Activated B cell treated with CpG ODN at 0.5 μM for 24 hours (primary cell): ENCODE measurements at regions of chr14 and their contacts with region 1.

Region 1: DNA sequence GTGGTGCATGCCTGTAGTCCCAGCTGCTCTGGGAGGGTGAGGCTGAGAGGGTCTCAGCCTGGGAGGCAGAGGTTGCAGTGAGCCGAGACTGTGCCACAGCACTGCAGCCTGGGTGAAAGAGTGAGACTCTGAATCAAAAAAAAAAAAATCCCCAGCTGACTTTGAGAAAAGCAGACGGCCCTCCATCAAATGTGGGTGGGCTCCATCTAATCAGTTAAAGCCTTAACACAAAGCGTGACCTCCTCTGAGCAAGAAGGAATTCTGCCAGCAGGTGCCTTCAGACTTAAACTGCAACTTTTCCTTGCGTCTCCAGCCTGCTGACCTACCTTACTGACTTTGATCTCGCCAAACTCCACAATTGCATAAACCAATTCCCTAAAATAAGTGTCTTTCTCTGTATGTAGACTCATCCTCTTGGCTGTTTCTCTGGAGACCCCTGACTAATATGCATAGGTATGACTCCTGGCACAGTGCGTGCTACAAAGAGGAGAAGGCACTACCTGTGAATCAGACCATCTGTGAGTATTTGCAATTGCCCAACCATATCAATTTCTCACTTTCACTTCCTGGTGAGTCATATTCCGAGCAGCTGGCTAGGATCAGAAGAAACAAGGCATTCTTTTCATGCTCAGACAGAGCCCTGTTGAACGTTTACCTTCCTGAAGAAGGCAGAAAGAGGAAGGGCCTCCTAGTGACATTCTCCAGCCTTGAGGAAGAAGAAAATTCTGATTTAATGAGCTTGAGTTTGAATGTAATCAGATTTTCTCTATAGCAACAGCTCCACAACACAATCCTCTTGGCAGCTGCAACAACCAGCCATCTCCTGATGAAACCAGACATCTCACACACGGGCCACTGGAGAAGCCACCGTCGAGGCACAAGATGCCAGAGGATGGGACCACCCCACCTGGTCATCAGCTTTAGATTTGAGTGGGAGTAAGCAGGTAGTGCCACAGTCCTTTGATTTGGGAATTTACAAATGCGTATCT is 54.3 kb downstream of the CLMN start:
- DNase-seq: peak; percentile 25
- ATAC-seq: peak; percentile 88
- H3K4me3 Mint-ChIP-seq: peak overlapping the region; percentile 63
- H3K27ac Mint-ChIP-seq: peak overlapping the region; percentile 87
- H3K4me1 Mint-ChIP-seq: peaks cover 55% of the 10 kb centered on the region
- H3K27me3 Mint-ChIP-seq: no peaks in the 10 kb centered on the region
- CTCF ChIP-seq: no peak

Region 2: GRCh38 chr14:95140060-95140858 is 125.1 kb before region 1 on chr14:
- CTCF ChIA-PET with region 1: no interaction called
- POLR2A ChIA-PET with region 1: no interaction called
- intact Hi-C with region 1: loop called (anchors 1 kb)
- DNase-seq: no peak
- ATAC-seq: peak; percentile 52
- H3K4me3 Mint-ChIP-seq: peak overlapping the region; percentile 64
- H3K27ac Mint-ChIP-seq: peak overlapping the region; percentile 78
- H3K4me1 Mint-ChIP-seq: peaks cover 79% of the 10 kb centered on the region
- H3K27me3 Mint-ChIP-seq: no peaks in the 10 kb centered on the region
- CTCF ChIP-seq: no peak

Region 3: DNA sequence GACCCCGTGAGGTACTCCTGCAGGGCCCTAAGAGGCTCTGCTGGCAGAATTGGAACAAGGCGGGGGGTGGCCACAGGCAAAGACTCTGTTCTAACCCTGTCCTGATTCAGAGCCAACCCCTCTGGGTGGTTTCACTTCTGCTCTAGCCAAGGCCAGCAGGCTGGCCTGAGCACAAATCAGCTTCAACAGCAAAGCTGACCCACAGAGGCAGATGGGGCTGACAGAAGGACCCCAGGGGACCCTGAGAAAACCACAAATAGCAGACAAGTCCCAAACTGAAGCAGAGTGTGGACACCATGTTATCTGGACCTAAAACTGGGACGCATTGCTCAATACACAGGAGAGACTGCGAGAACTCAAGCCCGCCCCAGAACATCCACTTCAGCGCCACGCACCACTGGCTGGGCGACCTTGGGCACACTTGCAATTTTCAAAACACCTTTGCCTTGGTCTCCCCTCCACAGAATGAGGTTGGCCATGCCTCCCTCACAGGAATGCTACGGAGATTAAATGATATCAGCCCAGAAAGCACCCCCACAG is 31.6 kb before region 1 on chr14:
- CTCF ChIA-PET with region 1: no interaction called
- POLR2A ChIA-PET with region 1: no interaction called
- intact Hi-C with region 1: loop called (anchors 2 kb)
- DNase-seq: peak; percentile 24
- ATAC-seq: peak; percentile 91
- H3K4me3 Mint-ChIP-seq: peak overlapping the region; percentile 19
- H3K27ac Mint-ChIP-seq: peak overlapping the region; percentile 50
- H3K4me1 Mint-ChIP-seq: peaks cover 21% of the 10 kb centered on the region
- H3K27me3 Mint-ChIP-seq: no peaks in the 10 kb centered on the region
- CTCF ChIP-seq: no peak

Region 4: DNA sequence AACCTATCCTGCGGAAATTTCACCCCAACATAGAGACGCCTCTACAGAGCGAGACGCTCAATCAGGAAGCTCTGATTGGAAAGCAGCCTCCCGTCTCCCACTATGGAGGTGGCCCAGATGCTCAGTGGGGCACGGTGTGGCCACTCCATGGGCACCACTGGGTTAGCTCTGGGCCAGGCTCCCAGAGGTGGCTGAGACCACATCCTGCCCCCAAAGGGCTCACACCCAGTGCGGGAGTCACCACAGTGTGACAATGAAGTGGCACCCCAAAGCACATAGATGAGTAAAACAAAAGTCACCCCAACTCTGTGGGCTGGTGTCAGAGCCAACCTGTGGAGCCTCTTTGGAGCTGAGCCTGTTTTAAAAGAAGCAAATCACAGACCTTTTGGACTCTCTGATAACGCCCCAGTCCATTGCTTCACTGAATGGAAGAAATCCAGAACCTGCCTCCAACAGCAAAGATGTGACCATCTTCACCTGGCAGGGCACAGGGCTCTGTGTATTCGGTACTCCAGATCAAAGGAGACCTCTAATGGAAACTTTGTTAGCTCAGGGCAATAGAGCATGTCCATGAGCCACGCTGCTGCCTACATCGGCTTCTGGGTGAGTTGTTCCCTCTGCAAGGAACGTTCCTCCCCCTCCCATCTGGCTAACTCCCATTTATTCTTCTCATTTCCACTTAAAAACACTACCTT is 34.7 kb after region 1 on chr14:
- CTCF ChIA-PET with region 1: no interaction called
- POLR2A ChIA-PET with region 1: interaction called, 11 read pairs
- intact Hi-C with region 1: loop called (anchors 1 kb)
- DNase-seq: no peak
- ATAC-seq: peak; percentile 78
- H3K4me3 Mint-ChIP-seq: no peak overlapping the region
- H3K27ac Mint-ChIP-seq: no peak overlapping the region
- H3K4me1 Mint-ChIP-seq: peaks cover 73% of the 10 kb centered on the region
- H3K27me3 Mint-ChIP-seq: no peaks in the 10 kb centered on the region
- CTCF ChIP-seq: no peak

Region 5: GRCh38 chr14:95327558-95328374 is 62.4 kb after region 1 on chr14:
- CTCF ChIA-PET with region 1: interaction called, 4 read pairs
- POLR2A ChIA-PET with region 1: interaction called, 28 read pairs
- intact Hi-C with region 1: loop called (anchors 1 kb)
- DNase-seq: peak; percentile 48
- ATAC-seq: peak; percentile 84
- H3K4me3 Mint-ChIP-seq: peak overlapping the region; percentile 76
- H3K27ac Mint-ChIP-seq: peak overlapping the region; percentile 97
- H3K4me1 Mint-ChIP-seq: peaks cover 53% of the 10 kb centered on the region
- H3K27me3 Mint-ChIP-seq: no peaks in the 10 kb centered on the region
- CTCF ChIP-seq: no peak

Region 6: DNA sequence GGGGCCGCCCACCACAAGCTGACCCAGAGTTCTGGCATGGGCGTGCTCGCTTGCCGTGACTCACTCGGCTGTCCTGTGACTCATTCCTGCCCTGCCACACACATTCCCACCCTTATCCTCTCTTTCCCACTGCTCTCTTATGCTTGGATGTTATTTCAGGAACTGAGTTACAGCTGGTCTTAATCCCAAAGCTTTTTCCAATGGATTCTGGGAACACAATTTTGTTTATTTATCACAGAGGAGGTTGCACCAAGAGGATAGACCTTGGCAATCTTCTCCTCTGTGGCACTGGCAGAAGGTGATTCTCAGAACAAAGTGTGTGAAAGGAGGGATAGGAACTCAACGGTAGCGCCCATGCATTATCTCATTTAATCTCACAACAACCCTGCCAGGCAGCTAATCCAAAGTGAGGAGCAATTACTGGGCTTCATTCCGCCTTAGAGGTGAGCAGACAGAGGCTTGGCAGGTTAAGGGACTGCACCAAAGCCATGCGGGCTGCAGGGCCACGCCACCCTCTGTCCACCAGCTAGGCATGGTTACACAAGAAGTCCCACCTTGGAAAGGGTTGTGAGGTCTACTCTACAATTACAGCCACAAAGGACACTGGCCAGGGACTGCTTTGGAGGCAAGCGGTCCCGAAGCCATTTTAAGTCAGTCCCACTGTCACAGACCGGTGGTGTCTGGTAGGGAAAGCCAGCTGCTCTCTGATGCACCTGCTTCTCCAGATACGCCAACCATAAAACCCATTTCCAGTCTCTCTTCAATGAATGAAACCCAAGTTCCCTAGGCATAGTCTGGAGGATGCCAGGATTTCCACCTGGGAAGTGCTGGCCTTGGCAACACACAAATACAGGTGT is 218.1 kb after region 1 on chr14:
- CTCF ChIA-PET with region 1: no interaction called
- POLR2A ChIA-PET with region 1: no interaction called
- intact Hi-C with region 1: no loop called
- DNase-seq: no peak
- ATAC-seq: no peak
- H3K4me3 Mint-ChIP-seq: no peak overlapping the region
- H3K27ac Mint-ChIP-seq: peak overlapping the region; percentile 35
- H3K4me1 Mint-ChIP-seq: peaks cover 81% of the 10 kb centered on the region
- H3K27me3 Mint-ChIP-seq: no peaks in the 10 kb centered on the region
- CTCF ChIP-seq: no peak

Region 7: GRCh38 chr14:95515596-95516552 is 250.5 kb after region 1 on chr14:
- CTCF ChIA-PET with region 1: no interaction called
- POLR2A ChIA-PET with region 1: no interaction called
- intact Hi-C with region 1: loop called (anchors 5 kb)
- DNase-seq: peak; percentile 89
- ATAC-seq: peak; percentile 85
- H3K4me3 Mint-ChIP-seq: peak overlapping the region; percentile 94
- H3K27ac Mint-ChIP-seq: peak overlapping the region; percentile 93
- H3K4me1 Mint-ChIP-seq: peaks cover 79% of the 10 kb centered on the region
- H3K27me3 Mint-ChIP-seq: no peaks in the 10 kb centered on the region
- CTCF ChIP-seq: no peak